ENCODE measurements at regions of chr16 and their contacts with region 1.

Region 1: DNA sequence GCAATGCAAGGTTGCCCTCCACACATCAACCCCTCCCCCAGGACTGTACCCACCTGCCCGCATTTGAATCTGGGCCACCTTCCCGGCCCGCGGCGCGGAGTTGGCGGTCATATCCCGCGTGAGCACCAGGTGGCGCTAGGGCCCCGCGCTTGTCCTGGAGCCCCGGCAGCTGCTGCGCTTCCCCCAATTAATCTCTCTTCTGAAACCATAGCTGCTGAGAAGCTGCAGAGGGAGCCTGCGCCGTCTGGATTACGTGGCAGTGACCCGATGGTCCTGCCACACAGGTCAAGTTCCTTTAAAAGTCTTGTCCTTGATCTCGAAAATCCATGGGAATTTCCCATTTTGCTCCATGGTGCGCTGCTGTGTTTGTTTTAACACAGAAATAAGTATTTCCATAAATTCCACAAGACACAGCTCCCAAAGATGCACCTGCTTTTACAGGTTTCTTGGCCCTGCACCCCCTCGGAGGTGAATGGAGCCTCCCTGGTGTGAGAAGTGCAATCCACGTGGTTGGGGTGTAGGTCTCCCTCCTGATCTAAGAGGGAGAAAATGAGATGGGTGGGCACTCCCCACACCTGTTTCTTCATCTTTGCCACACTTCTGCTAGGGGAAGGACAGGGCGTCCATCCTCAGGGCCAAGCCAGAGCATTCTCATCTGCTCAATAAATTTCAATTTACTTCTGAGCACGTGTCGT is 22.1 kb downstream of the COX4I1 start:
- DNase-seq: peak; percentile 41
- ATAC-seq: peak; percentile 94
- H3K4me3 ChIP-seq: no peak overlapping the region
- H3K27ac ChIP-seq: no peak overlapping the region
- H3K4me1 ChIP-seq: peaks cover 18% of the 10 kb centered on the region
- H3K27me3 ChIP-seq: no peaks in the 10 kb centered on the region
- CTCF ChIP-seq: peak; percentile 91 to 99 (median 93)
- EP300 ChIP-seq: 0 out of 4 replicates have a peak, but pooled peaks of 1 of the 2 experiments have one; percentile 16
- POLR2A ChIP-seq: no peak
- RAD21 ChIP-seq: peak; percentile 99

Region 2: GRCh38 chr16:85210423-85211169 is 611.0 kb before region 1 on chr16:
- CTCF ChIA-PET with region 1: no interaction called
- POLR2A ChIA-PET with region 1: no interaction called
- RAD21 ChIA-PET with region 1: no interaction called
- SMC1A ChIA-PET with region 1: no interaction called
- in situ Hi-C with region 1: no loop called
- intact Hi-C with region 1: no loop called
- DNase-seq: no peak
- ATAC-seq: peak; percentile 56
- H3K4me3 ChIP-seq: no peak overlapping the region
- H3K27ac ChIP-seq: no peak overlapping the region
- H3K4me1 ChIP-seq: no peaks in the 10 kb centered on the region
- H3K27me3 ChIP-seq: no peaks in the 10 kb centered on the region
- CTCF ChIP-seq: no peak
- EP300 ChIP-seq: no peak
- POLR2A ChIP-seq: no peak
- RAD21 ChIP-seq: no peak

Region 3: DNA sequence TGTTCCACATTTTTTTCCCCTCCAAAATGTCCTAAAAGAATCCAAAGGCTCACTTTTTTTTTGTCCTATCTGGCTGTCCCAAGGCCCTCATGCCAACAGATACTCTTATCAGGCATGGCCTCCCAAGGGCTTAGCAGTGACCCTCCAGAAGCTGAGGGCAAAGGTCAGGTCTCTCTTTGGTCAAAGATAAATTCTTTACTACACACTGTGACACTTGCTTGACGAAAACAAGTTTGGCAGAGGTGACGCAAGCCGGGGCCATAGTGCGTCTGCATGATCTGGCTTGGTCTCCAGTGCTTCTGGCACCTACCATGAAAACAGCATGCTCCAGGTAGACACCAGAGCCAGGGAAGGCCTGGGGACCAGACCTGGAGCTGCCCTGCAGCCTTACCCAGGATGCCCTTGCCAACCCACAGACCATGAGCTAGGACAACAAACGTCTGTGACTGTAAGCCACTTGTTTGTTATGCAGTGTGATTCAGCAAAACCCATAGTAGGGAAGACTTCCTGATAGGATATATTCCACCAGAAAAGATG is 28.8 kb after region 1 on chr16:
- CTCF ChIA-PET with region 1: interaction called, 10 read pairs
- POLR2A ChIA-PET with region 1: interaction called, 3 read pairs
- RAD21 ChIA-PET with region 1: no interaction called
- SMC1A ChIA-PET with region 1: interaction called, 7 read pairs
- in situ Hi-C with region 1: no loop called
- intact Hi-C with region 1: no loop called
- DNase-seq: no peak
- ATAC-seq: no peak
- H3K4me3 ChIP-seq: no peak overlapping the region
- H3K27ac ChIP-seq: no peak overlapping the region
- H3K4me1 ChIP-seq: peaks cover 7% of the 10 kb centered on the region
- H3K27me3 ChIP-seq: no peaks in the 10 kb centered on the region
- CTCF ChIP-seq: no peak
- EP300 ChIP-seq: no peak
- POLR2A ChIP-seq: no peak
- RAD21 ChIP-seq: no peak

Region 4: GRCh38 chr16:85916141-85916890 is 94.7 kb after region 1 on chr16:
- CTCF ChIA-PET with region 1: interaction called, 9 read pairs
- POLR2A ChIA-PET with region 1: no interaction called
- RAD21 ChIA-PET with region 1: interaction called, 9 read pairs
- SMC1A ChIA-PET with region 1: interaction called, 19 read pairs
- in situ Hi-C with region 1: no loop called
- intact Hi-C with region 1: no loop called
- DNase-seq: no peak
- ATAC-seq: peak; percentile 7; the same call in 2 of the 3 replicates
- H3K4me3 ChIP-seq: no peak overlapping the region
- H3K27ac ChIP-seq: no peak overlapping the region
- H3K4me1 ChIP-seq: peaks cover 56% of the 10 kb centered on the region
- H3K27me3 ChIP-seq: no peaks in the 10 kb centered on the region
- CTCF ChIP-seq: no peak
- EP300 ChIP-seq: no peak
- POLR2A ChIP-seq: peak; percentile 75; the same call in 1 of the 2 replicates
- RAD21 ChIP-seq: no peak

Region 5: DNA sequence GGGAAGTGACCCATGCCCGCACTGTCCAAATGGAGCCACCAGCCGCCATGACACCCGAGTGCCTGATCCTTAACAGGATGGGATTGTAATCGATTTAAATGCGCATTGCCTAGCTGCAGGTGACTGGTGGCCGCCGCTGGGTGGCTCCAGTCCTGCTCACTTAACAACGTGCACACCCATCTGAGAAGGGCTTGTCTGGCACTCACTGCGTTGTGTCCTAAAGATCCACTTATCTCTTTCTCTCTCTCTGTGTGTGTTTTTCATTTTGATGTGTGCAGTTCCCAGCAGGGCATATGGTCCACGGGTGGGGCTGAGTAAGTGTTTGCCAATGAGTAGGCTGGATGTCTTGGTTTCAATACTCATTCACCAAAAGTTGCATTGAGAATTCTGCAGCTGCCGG is 158.0 kb after region 1 on chr16:
- CTCF ChIA-PET with region 1: interaction called, 337 read pairs
- POLR2A ChIA-PET with region 1: no interaction called
- RAD21 ChIA-PET with region 1: interaction called, 194 read pairs
- SMC1A ChIA-PET with region 1: interaction called, 208 read pairs
- in situ Hi-C with region 1: no loop called
- intact Hi-C with region 1: no loop called
- DNase-seq: no peak
- ATAC-seq: peak; percentile 94
- H3K4me3 ChIP-seq: no peak overlapping the region
- H3K27ac ChIP-seq: no peak overlapping the region
- H3K4me1 ChIP-seq: peaks cover 15% of the 10 kb centered on the region
- H3K27me3 ChIP-seq: no peaks in the 10 kb centered on the region
- CTCF ChIP-seq: peak; percentile 22 to 53 (median 47); a peak in 4 of 6 replicates
- EP300 ChIP-seq: no peak
- POLR2A ChIP-seq: no peak
- RAD21 ChIP-seq: no peak

Region 6: GRCh38 chr16:86010680-86011141 is 189.1 kb after region 1 on chr16:
- CTCF ChIA-PET with region 1: interaction called, 345 read pairs
- POLR2A ChIA-PET with region 1: no interaction called
- RAD21 ChIA-PET with region 1: interaction called, 54 read pairs
- SMC1A ChIA-PET with region 1: interaction called, 229 read pairs
- in situ Hi-C with region 1: loop called (anchors 5 kb)
- intact Hi-C with region 1: no loop called
- DNase-seq: no peak
- ATAC-seq: peak; percentile 71
- H3K4me3 ChIP-seq: no peak overlapping the region
- H3K27ac ChIP-seq: peak overlapping the region; percentile 66
- H3K4me1 ChIP-seq: peaks cover 47% of the 10 kb centered on the region
- H3K27me3 ChIP-seq: no peaks in the 10 kb centered on the region
- CTCF ChIP-seq: no peak
- EP300 ChIP-seq: peak in 1 of 2 experiments; percentile 54; a peak in 2 of 4 replicates
- POLR2A ChIP-seq: no peak
- RAD21 ChIP-seq: no peak

Measured in GM12878 (cell line).